ENCODE measurements at regions of chr1 and their contacts with region 1.

Region 1: DNA sequence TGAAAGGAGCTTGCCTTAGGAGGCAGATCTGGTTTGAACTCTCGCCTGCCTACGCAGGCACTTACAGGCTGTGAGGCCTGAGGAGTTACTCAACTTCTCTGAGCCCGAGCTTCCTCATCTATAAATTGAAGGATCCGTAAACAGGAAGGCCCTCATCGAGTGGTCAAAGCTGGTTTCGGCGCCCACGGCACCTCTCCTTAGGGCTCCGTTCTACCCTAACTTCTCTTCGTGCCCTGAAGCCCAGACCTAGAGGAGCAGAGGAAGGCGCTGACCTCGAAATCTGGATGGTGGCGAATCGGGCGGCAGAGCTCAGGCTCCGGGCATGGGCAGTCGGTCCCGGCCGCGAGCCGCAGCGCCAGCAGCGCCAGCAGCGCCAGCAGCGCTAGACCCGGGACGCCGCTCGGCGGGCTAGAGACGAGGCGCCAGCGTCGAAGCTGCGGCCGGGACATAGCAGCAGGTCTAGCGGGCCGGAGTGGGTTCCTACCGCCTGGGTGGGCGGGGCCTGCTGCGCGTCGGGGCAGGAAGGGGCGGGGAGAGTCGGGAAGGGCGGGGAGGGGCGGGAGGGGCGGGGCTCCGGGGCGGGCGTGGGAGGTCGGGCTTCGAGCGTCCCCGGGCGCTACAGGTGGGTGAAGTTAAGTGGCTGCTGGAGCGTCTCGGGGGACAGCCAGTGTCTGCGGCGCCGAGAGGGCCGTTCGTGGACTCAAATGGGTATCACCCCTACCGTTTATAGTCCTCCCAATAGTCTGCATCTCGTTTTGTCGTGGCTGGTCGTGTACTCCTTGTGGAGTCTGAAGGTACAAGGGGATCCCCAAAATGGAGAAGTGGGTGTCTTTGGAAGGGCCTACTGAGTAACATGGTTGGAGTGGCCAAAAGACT is at the start of gene CTBS:
- DNase-seq: peak; percentile 87 to 93
- ATAC-seq: peak; percentile 95
- total RNA-seq, gene CTBS: 20.5 to 23.7 TPM

Region 2: DNA sequence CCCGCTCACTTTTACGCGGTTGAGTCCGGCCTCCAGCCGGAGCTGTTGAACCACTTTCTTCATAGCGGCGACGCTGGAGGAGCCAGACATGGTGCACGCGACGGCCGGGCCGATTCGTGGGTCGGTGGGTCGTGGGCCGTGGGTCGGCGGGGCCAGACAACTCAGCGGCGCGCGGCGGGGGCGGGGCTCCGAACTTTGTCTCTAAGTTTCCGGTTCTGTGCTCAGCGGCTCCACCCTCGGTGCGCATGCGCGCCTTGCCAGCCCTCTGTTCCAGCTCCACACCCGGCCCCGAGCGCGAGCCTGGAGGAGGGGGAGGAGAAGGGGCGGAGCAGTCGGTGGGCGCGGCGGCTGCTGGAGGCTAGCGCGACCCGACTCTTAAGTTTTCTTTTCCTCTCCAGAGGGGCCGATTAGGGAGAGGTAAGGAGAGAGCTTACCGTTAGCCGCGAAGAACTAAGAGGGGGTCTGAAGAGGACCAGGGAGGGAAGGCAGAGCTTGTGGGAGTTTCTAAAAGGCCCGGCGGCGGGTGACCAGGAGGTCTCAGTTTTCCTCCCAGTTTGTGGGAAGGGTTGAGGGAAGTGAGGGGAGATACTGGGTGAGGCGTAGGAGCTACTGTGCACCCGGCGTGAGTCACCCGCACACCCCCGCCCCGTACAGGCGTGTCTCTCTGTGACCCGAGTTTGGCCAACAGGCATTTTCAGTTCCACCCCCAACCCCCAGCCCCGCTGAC is 68.0 kb before region 1 on chr1 and contains the starts of genes GNG5 and SPATA1:
- intact Hi-C with region 1: loop called in 1 of 2 experiments (anchors 10 kb)
- DNase-seq: peak; percentile 98 to 100
- ATAC-seq: peak; percentile 93
- total RNA-seq, gene GNG5: 126 to 148 TPM
- total RNA-seq, gene SPATA1: 0.61 to 1.1 TPM